Activated CD4-positive, alpha-beta T cell treated with anti-CD3 and anti-CD28 coated beads, Interleukin-2, amount 10 ng/mL, durations not matched to agents 7 days and 5 days (primary cell): ENCODE measurements at regions of chr21 and their contacts with region 1.

Region 1: DNA sequence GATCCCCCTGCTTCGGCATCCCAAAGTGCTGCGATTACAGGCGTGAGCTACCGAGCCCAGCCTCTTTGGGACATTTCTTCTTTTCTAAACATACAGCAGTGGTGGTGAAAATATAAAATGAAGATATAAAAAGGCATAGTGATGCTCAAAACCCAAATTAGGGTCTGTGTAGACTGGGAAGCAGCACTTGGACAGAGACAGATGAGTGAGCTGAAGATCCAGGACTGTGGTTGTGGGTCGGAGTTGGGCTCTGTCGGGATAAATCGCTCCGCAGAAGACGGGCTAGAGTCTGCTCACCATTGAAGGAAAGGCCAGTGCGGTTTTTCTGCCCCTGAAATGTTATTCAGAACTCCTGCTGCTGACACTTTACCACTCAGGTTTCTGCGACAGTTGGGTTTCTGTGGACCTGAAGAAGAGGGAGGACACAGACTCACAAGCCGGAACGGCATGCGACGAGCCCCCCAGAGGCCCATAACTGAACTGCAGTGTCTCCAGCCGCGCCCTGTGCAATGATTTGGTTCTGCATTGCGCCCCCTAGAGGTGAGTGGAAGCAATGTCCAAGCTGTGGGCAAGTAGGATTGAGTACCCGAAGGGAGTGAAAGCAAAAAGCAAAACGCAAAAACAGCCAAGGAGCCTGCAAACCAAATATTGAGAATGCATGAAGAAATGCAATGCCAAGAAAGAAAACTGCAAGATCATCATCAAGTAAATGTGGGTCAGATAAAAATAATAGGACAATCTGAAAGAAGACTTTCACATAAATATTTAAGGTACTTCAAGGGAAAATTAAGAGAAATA is 66.6 kb downstream of the GABPA start:
- DNase-seq: peak; percentile 94
- H3K4me3 Mint-ChIP-seq: no peak overlapping the region
- H3K27ac Mint-ChIP-seq: no peak overlapping the region
- H3K4me1 Mint-ChIP-seq: peaks cover 6% of the 10 kb centered on the region
- H3K27me3 Mint-ChIP-seq: peaks cover 15% of the 10 kb centered on the region

Region 2: GRCh38 chr21:25790122-25790877 is 11.1 kb before region 1 on chr21:
- CTCF ChIA-PET with region 1: interaction called, 10 read pairs
- POLR2A ChIA-PET with region 1: no interaction called
- DNase-seq: no peak
- H3K4me3 Mint-ChIP-seq: peak overlapping the region; percentile 49
- H3K27ac Mint-ChIP-seq: peak overlapping the region; percentile 54
- H3K4me1 Mint-ChIP-seq: peaks cover 10% of the 10 kb centered on the region
- H3K27me3 Mint-ChIP-seq: peaks cover 15% of the 10 kb centered on the region

Region 3: GRCh38 chr21:25826652-25827051 is 25.2 kb after region 1 on chr21:
- CTCF ChIA-PET with region 1: no interaction called
- POLR2A ChIA-PET with region 1: no interaction called
- DNase-seq: no peak
- H3K4me3 Mint-ChIP-seq: no peak overlapping the region
- H3K27ac Mint-ChIP-seq: no peak overlapping the region
- H3K4me1 Mint-ChIP-seq: no peaks in the 10 kb centered on the region
- H3K27me3 Mint-ChIP-seq: no peaks in the 10 kb centered on the region

Region 4: GRCh38 chr21:25887166-25887565 is 85.8 kb after region 1 on chr21:
- CTCF ChIA-PET with region 1: no interaction called
- POLR2A ChIA-PET with region 1: no interaction called
- DNase-seq: no peak
- H3K4me3 Mint-ChIP-seq: no peak overlapping the region
- H3K27ac Mint-ChIP-seq: no peak overlapping the region
- H3K4me1 Mint-ChIP-seq: peaks cover 1% of the 10 kb centered on the region
- H3K27me3 Mint-ChIP-seq: no peaks in the 10 kb centered on the region